CD8-positive, alpha-beta memory T cell (primary cell): ENCODE measurements at regions of chr3 and their contacts with region 1.

Region 1: GRCh38 chr3:153161138-153161713 is 800 bp upstream of the RAP2B start:
- DNase-seq: peak; percentile 81 to 95 (median 92)
- H3K4me3 ChIP-seq: peak overlapping the region; percentile 97
- H3K4me3 Mint-ChIP-seq: peak overlapping the region; percentile 95 to 100 (median 99)
- H3K27ac ChIP-seq: peak overlapping the region; percentile 83
- H3K27ac Mint-ChIP-seq: peak overlapping the region; percentile 94 to 99 (median 98)
- H3K4me1 ChIP-seq: peaks cover 25% of the 10 kb centered on the region
- H3K4me1 Mint-ChIP-seq: peaks cover 30 to 38% (median 37%) of the 10 kb centered on the region in 3 donors
- H3K27me3 ChIP-seq: no peaks in the 10 kb centered on the region
- H3K27me3 Mint-ChIP-seq: no peaks in the 10 kb centered on the region

Region 2: DNA sequence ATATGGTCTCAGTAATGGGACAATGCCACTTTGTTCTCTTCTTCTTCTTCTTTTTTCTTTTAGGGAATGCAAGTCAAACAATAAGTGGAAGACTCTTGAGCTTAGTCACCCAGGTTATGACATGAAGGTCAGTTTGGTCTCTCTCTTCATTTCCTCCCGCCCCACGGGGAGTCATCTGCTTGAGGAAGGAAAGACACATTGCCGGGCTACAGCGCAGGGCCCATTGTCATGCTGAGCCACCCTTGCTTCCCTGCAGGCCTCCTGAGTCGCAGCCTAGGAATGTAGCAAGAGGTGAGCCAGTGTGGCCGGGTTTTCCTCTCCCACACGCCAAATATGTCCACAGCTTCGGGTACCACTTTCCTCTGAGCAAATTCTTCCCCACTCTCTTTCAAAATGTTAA is 48.4 kb after region 1 on chr3:
- CTCF ChIA-PET with region 1: interaction called, 11 read pairs
- POLR2A ChIA-PET with region 1: no interaction called
- DNase-seq: no peak
- H3K4me3 ChIP-seq: no peak overlapping the region
- H3K4me3 Mint-ChIP-seq: peak overlapping the region in 3 of 7 donors; percentile 26 to 68 (median 61)
- H3K27ac ChIP-seq: no peak overlapping the region
- H3K27ac Mint-ChIP-seq: peak overlapping the region in 2 of 8 donors; percentile 71 to 84
- H3K4me1 ChIP-seq: peaks cover 18% of the 10 kb centered on the region
- H3K4me1 Mint-ChIP-seq: peaks cover 32 to 52% (median 47%) of the 10 kb centered on the region in 3 donors
- H3K27me3 ChIP-seq: no peaks in the 10 kb centered on the region
- H3K27me3 Mint-ChIP-seq: peaks cover 0 to 2% of the 10 kb centered on the region in 2 donors

Region 3: DNA sequence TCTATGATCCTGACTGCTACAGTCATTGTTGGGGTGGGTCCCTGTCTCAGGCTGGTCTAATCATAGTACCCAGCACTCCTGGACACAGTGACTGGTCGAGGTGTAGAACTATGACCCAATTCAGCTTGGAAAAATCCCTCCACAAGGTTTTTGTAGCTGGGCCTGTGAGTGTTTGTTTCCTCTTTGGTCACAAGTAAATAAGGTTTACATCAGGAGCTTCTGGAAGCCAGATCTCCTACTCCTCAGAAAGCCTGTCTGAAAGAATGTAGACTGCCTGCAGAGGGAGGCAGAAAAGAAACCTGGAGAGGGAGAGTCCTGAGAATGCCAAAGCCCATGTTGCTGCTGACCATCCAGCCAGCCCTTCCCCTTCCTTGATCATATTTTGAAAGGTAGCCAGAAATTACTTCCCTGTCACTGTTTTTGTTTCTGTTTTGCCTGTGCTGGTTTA is 124.0 kb after region 1 on chr3:
- CTCF ChIA-PET with region 1: interaction called, 47 read pairs
- POLR2A ChIA-PET with region 1: interaction called, 9 read pairs
- DNase-seq: no peak
- H3K4me3 ChIP-seq: no peak overlapping the region
- H3K4me3 Mint-ChIP-seq: peak overlapping the region in 4 of 7 donors; percentile 8 to 83 (median 44)
- H3K27ac ChIP-seq: no peak overlapping the region
- H3K27ac Mint-ChIP-seq: peak overlapping the region in 7 of 8 donors; percentile 54 to 90 (median 83)
- H3K4me1 ChIP-seq: peaks cover 43% of the 10 kb centered on the region
- H3K4me1 Mint-ChIP-seq: peaks cover 45 to 56% (median 54%) of the 10 kb centered on the region in 3 donors
- H3K27me3 ChIP-seq: no peaks in the 10 kb centered on the region
- H3K27me3 Mint-ChIP-seq: no peaks in the 10 kb centered on the region

Region 4: GRCh38 chr3:153621953-153622352 is 460.7 kb after region 1 on chr3:
- CTCF ChIA-PET with region 1: interaction called, 9 read pairs
- POLR2A ChIA-PET with region 1: interaction called, 12 read pairs
- DNase-seq: peak in 1 of 5 donors; percentile 9
- H3K4me3 ChIP-seq: peak overlapping the region; percentile 24
- H3K4me3 Mint-ChIP-seq: peak overlapping the region; percentile 1 to 59 (median 55)
- H3K27ac ChIP-seq: no peak overlapping the region
- H3K27ac Mint-ChIP-seq: peak overlapping the region; percentile 44 to 97 (median 72)
- H3K4me1 ChIP-seq: peaks cover 43% of the 10 kb centered on the region
- H3K4me1 Mint-ChIP-seq: peaks cover 45 to 69% (median 67%) of the 10 kb centered on the region in 3 donors
- H3K27me3 ChIP-seq: no peaks in the 10 kb centered on the region
- H3K27me3 Mint-ChIP-seq: no peaks in the 10 kb centered on the region